Heart right ventricle (tissue), 16 donors: ENCODE measurements at regions of chr4 and their contacts with region 1.

Region 1: DNA sequence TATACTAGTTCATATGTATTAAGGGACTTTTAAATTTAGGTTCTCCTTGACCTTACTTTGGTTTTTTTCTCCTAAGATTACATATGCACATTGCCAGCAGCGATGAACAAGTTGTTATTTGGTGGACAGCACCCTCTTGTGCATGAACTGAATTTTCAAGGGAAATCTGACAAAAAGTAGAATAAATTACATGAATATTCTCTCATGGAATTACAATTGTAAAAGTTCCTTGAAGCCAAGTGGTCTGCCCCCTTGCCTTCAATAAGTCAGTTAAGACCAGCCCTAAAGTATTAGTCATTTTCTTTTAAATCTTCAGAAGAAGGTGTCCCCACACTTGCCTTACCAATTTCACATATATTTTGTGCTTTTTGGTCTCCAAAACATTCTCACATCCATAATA is 30.7 kb upstream of the SMARCA5 start:
- DNase-seq: peak in 1 of 2 donors; percentile 20
- ATAC-seq: peak in 6 of 8 donors; percentile 20 to 64 (median 54)
- H3K4me3 ChIP-seq: no peak overlapping the region
- H3K27ac ChIP-seq: no peak overlapping the region
- H3K4me1 ChIP-seq: peaks cover 0 to 9% (median 0%) of the 10 kb centered on the region in 9 donors
- H3K27me3 ChIP-seq: no peaks in the 10 kb centered on the region
- CTCF ChIP-seq: peak; percentile 36 to 86 (median 64)

Region 2: DNA sequence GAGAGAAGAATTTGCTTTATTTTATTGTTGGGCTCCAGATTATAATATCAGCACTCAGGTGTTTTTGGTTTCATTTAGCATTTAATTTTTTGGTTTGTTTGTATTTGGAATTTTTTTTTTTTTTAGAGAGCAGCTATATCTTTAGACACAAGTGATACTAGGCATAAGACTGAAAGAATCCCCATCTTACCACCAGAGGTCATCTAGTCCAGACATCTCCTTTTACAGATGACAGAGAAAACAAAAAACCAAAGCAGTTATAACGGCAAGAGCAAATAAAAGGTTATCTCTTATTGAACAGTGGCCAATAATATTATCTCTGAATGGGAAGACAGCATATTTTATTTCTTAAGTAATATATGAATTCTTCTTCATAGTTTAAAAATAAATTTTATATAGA is 275.3 kb before region 1 on chr4:
- intact Hi-C with region 1: loop called (anchors 2 to 10 kb)
- DNase-seq: no peak
- ATAC-seq: peak in 5 of 8 donors; percentile 38 to 63 (median 58)
- H3K4me3 ChIP-seq: no peak overlapping the region
- H3K27ac ChIP-seq: no peak overlapping the region
- H3K4me1 ChIP-seq: peaks cover 0 to 13% (median 7%) of the 10 kb centered on the region in 9 donors
- H3K27me3 ChIP-seq: no peaks in the 10 kb centered on the region
- CTCF ChIP-seq: peak; percentile 9 to 68 (median 53)

Region 3: DNA sequence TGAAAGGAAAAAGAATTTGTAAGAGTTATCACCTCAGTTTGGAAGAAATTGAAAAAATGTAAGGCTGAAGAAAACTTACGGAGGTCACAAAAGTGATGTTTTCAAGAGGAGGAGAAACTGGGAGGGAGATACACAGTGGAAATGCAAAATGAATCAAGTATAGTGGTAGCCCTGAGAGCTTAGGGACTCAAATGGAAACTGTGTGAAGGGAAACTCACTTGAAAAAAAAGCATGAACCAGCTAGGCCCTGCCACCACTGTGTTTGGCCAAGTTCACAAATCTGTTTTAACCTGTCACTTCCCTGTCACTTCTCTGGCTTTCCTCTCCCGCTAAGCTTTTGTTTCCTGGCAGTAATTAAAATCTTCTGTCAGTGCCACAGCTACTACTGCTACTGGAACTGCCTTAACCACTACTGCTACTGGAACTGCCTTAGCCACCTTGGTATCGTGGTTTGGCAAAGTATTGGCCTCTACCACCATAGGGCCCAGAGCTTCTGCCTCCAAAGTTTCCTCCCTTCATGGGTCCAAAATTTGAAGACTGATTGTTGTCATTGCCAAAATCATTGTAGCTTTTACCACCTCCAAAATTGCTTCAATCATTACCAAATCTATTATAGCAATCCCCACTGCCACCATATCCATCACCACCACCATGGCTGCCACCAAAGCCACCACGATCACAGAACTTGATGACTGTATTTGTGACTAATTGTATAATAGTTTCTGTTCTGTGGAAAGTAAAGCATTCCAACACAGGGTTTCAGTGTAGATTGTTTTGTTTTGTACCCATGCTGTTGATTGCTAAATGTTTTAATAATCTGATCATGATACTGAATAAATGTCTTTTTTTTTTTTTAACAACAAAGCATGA is 72.1 kb after region 1 on chr4:
- intact Hi-C with region 1: no loop called
- DNase-seq: no peak
- ATAC-seq: no peak
- H3K4me3 ChIP-seq: no peak overlapping the region
- H3K27ac ChIP-seq: no peak overlapping the region
- H3K4me1 ChIP-seq: peaks cover 0 to 21% (median 4%) of the 10 kb centered on the region in 9 donors
- H3K27me3 ChIP-seq: peaks cover 0 to 3% (median 0%) of the 10 kb centered on the region in 7 donors
- CTCF ChIP-seq: no peak